ENCODE measurements at regions of chr15 and their contacts with region 1.

Region 1: GRCh38 chr15:51341366-51342226 is at the start of gene GLDN:
- DNase-seq: peak in 4 of 6 donors; percentile 13 to 76 (median 48)
- ATAC-seq: peak; percentile 60 to 76 (median 72)
- H3K4me3 ChIP-seq: peak within 1 kb of the TSS; percentile 12 to 46 (median 20)
- H3K27ac ChIP-seq: peak within 1 kb of the TSS in 1 of 4 donors; percentile 19
- H3K4me1 ChIP-seq: peaks cover 0 to 4% (median 0%) of the 10 kb centered on the region in 3 donors
- H3K27me3 ChIP-seq: peaks cover 0 to 4% (median 0%) of the 10 kb centered on the region in 4 donors
- CTCF ChIP-seq: no peak
- total RNA-seq, gene GLDN: 0.54 to 16.8 (median 0.70) TPM in 4 of 6 donors, not detected in the others

Region 2: GRCh38 chr15:51390966-51391432 is 49.4 kb after region 1 on chr15:
- intact Hi-C with region 1: loop called in 1 of 3 experiments (anchors 5 kb)
- DNase-seq: no peak
- ATAC-seq: no peak
- H3K4me3 ChIP-seq: no peak overlapping the region
- H3K27ac ChIP-seq: no peak overlapping the region
- H3K4me1 ChIP-seq: no peaks in the 10 kb centered on the region
- H3K27me3 ChIP-seq: no peaks in the 10 kb centered on the region
- CTCF ChIP-seq: no peak

Region 3: DNA sequence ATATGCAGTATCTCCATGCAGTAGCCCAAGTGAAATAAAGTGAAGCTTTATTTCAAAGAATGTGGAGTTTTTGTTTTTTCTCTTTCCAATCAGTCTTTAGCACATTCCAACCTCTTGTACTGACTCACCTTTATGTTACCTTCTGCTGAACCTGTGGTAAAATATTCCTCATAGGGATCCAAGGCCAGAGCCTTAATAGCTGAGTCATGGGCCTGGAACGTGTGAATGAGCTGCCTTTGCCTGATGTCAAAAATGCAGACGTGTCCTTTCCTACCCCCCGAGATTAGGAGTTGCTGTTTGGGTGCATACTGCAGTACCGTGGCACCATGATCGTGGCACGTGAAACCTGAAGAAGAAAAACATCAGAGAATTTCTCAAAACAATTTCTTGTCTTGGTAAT is 108.4 kb after region 1 on chr15:
- intact Hi-C with region 1: no loop called
- DNase-seq: peak in 1 of 6 donors; percentile 16
- ATAC-seq: peak; percentile 59 to 82 (median 73)
- H3K4me3 ChIP-seq: no peak overlapping the region
- H3K27ac ChIP-seq: no peak overlapping the region
- H3K4me1 ChIP-seq: no peaks in the 10 kb centered on the region
- H3K27me3 ChIP-seq: no peaks in the 10 kb centered on the region
- CTCF ChIP-seq: no peak

Measured in pancreas (tissue), 10 donors.